Mammary epithelial cell (primary cell): ENCODE measurements at regions of chr6 and their contacts with region 1.

Region 1: GRCh38 chr6:25359191-25359861 is 80.2 kb downstream of the CARMIL1 start:
- DNase-seq: peak; percentile 58
- H3K4me3 ChIP-seq: peak overlapping the region in 1 of 3 experiments; percentile 2
- H3K27ac ChIP-seq: peak overlapping the region; percentile 81
- H3K4me1 ChIP-seq: peaks cover 52% of the 10 kb centered on the region
- H3K27me3 ChIP-seq: no peaks in the 10 kb centered on the region
- CTCF ChIP-seq: no peak

Region 2: GRCh38 chr6:25263657-25264056 is 95.7 kb before region 1 on chr6:
- CTCF ChIA-PET with region 1: no interaction called
- dilution Hi-C with region 1: no loop called
- in situ Hi-C with region 1: no loop called
- intact Hi-C with region 1: no loop called
- DNase-seq: peak; percentile 68
- H3K4me3 ChIP-seq: no peak overlapping the region
- H3K27ac ChIP-seq: no peak overlapping the region
- H3K4me1 ChIP-seq: no peaks in the 10 kb centered on the region
- H3K27me3 ChIP-seq: no peaks in the 10 kb centered on the region
- CTCF ChIP-seq: no peak

Region 3: DNA sequence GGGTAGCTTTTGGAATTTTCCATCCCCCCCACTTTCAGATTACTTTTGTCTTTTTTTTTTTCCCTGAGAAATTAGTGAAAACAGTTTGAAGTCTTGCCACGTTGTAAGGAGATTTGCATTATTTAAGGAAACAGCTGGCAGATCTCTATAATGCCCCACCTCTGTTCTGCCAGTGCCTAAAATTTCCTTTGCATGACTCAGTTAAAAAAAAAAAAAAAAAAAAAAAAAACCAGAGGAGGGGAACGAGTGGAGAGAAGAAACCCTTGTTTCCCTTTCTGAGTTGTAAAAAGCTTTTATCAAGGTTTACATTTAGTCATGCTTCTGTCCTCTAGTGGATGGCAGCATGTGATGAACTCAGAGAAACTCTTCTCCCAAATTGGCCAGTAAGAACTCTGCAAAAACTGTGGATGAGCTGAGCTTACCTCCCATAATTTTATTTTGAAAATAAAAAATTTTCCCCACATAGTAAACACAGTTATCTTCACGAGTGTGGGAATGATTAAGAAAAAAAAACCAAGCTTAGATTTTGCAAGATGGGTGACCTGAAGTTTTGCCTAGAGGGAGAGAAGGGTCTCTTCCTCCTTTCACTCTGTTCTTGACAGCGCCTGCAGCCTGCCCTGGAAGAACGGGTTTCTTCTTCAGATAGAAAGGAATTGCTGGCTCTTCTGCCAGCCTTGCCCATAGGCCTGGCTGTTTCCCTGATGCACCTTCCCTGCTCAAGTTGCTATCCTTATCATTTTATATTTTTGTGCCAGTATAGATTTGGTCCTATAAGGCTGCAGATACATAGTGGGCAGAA is 46.4 kb before region 1 on chr6:
- CTCF ChIA-PET with region 1: no interaction called
- dilution Hi-C with region 1: no loop called
- in situ Hi-C with region 1: no loop called
- intact Hi-C with region 1: no loop called
- DNase-seq: peak; percentile 77
- H3K4me3 ChIP-seq: peak overlapping the region in 2 of 3 experiments; percentile 9 to 44
- H3K27ac ChIP-seq: peak overlapping the region; percentile 80
- H3K4me1 ChIP-seq: peaks cover 33% of the 10 kb centered on the region
- H3K27me3 ChIP-seq: no peaks in the 10 kb centered on the region
- CTCF ChIP-seq: peak in 1 of 2 donors; percentile 25

Region 4: DNA sequence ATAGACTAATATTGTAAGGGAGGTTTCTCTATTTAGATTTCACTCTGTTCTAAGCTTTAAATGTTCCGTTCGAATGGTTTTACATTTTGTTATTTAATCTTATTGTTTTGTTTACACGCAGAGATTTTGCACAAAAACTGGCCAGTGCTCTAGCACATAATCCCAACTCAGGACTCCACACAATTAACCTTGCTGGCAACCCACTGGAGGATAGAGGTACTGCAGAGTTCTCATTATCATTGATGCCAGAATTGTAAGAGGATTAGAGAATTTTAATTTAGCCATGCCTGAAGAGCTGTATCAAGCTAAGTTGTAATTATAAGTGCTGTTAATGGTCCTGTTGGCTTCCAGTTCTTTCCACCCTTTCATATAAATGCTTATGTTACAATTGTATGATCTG is 113.0 kb after region 1 on chr6:
- CTCF ChIA-PET with region 1: no interaction called
- dilution Hi-C with region 1: no loop called
- in situ Hi-C with region 1: no loop called
- intact Hi-C with region 1: loop called (anchors 5 kb)
- DNase-seq: no peak
- H3K4me3 ChIP-seq: no peak overlapping the region
- H3K27ac ChIP-seq: no peak overlapping the region
- H3K4me1 ChIP-seq: peaks cover 18% of the 10 kb centered on the region
- H3K27me3 ChIP-seq: no peaks in the 10 kb centered on the region
- CTCF ChIP-seq: peak; percentile 25 to 41

Region 5: DNA sequence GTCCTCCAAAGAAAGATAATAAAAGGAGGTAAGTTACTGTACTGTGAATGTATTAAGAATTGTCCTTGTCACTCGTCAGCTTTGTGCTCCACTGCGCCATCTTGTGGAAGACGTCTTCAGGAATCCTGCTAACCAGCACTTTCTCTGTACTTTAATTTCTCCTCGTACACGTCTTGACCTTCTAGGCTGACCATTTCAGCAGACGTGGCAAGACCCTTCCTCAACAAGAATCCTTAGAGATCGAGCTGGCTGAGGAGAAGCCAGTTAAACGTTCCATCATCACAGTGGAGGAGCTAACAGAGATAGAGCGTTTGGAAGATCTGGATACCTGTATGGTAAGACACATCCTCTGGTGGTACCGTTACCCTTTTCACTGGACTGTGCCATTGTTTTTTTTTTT is 197.2 kb after region 1 on chr6:
- CTCF ChIA-PET with region 1: no interaction called
- dilution Hi-C with region 1: no loop called
- in situ Hi-C with region 1: no loop called
- intact Hi-C with region 1: loop called (anchors 1 kb)
- DNase-seq: peak; percentile 35
- H3K4me3 ChIP-seq: no peak overlapping the region
- H3K27ac ChIP-seq: no peak overlapping the region
- H3K4me1 ChIP-seq: no peaks in the 10 kb centered on the region
- H3K27me3 ChIP-seq: no peaks in the 10 kb centered on the region
- CTCF ChIP-seq: peak; percentile 87